Upper lobe of right lung (tissue), 1 donor: ENCODE measurements at regions of chr15 and their contacts with region 1.

Region 1: DNA sequence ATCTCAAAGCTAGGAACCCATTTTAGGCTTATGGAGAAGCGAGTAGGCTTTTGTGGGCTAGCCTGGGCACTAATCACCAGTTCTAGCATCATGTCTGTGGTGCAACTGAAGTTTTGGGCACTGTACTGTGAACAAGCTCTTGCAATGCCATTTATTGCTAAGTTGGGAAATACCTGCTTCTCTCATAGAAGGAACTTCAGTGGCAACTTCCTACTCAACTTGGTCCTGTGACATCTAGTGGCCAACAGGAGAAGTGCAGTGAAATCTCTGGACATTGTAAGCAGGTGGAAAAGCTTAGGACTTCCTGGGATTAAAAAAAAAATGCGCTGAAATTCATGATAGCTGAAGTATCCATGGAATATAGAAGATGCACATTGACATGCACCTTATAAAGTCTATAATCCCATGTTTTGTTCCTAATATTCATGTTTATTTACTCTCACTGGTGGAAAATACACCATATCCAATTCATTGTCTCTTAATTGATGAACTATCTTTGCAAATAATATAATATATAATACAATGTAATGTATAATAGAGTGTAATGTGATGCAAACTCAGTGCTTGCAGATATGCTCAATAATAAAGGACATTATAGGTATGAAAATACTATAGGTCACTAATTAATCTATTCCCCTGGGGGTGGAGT is 6.5 kb upstream of the ALDH1A3 start:
- DNase-seq: no peak
- ATAC-seq: peak; percentile 94
- H3K4me3 ChIP-seq: no peak overlapping the region
- H3K27ac ChIP-seq: no peak overlapping the region
- H3K4me1 ChIP-seq: no peaks in the 10 kb centered on the region
- H3K27me3 ChIP-seq: peaks cover 1% of the 10 kb centered on the region
- CTCF ChIP-seq: peak; percentile 90

Region 2: DNA sequence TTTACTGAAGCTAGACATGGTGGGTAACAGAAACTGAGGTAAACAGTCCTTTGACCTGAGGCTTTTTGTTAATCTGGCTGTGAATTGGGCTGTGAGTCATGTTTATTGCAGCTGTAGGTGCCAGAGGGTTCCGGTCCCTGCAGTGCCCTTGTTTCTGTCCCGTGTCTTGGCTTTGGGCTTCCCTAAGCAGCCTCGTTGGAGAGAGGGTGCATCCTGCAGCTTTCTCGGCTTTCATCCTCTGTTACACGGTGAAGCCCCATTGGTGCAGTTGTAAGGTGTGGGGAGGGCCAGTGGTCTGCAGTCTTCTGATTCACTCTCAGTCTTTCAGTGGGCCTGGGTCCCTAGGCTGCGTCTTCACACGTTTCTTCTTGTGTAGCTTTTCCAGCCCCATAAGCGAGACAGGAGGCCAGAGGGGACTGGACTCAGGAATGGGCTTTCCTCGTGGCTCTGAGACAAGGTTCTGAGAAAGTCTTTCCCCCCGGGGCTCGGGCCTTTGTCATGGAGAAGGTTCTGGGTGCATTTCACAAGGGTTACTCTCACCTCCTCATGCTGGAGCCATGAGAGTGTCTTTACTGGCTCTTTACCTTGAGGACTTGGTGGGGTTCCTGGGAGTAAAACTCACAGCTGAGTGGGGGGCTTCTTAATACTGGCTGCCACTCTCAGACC is 237.6 kb before region 1 on chr15:
- intact Hi-C with region 1: loop called (anchors 10 kb)
- DNase-seq: no peak
- ATAC-seq: no peak
- H3K4me3 ChIP-seq: no peak overlapping the region
- H3K27ac ChIP-seq: no peak overlapping the region
- H3K4me1 ChIP-seq: peaks cover 4% of the 10 kb centered on the region
- H3K27me3 ChIP-seq: no peaks in the 10 kb centered on the region
- CTCF ChIP-seq: no peak